ENCODE measurements at regions of chr2 and their contacts with region 1.

Region 1: DNA sequence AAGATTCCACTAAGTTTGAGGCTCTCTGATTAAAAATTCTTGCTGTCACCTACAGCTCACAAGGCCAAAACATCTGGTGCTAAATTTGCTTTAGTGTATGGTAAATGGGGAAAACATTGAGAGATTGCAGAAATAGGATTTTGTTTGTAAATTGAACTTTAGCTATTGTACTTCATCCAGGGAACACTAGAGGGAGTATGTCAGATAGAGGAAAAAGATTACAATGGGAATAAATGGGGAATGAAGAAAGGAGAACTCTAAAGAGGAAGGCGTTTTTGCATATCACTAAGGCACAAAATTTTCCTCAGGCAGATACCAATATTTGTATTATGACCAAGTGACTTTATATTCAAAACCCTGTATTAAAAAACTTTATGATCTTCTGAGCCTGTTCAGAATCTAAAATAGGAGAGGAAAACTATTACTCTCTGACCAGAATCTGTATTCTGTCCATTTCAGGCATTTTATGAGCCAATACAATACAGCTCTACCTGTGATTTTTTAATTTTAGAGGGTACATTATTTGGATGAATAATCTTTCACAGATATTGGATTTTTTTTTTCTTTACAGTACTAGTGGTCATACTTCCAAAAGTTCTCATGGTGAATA is 52.3 kb upstream of the ITGB6 start:
- DNase-seq: no peak
- ATAC-seq: peak in 4 of 8 donors; percentile 38 to 57 (median 48)
- H3K4me3 ChIP-seq: no peak overlapping the region
- H3K27ac ChIP-seq: peak overlapping the region in 9 of 10 donors; percentile 35 to 78 (median 69)
- H3K4me1 ChIP-seq: peaks cover 0 to 36% (median 11%) of the 10 kb centered on the region in 9 donors
- H3K27me3 ChIP-seq: no peaks in the 10 kb centered on the region
- CTCF ChIP-seq: peak; percentile 67 to 87 (median 79)

Region 2: DNA sequence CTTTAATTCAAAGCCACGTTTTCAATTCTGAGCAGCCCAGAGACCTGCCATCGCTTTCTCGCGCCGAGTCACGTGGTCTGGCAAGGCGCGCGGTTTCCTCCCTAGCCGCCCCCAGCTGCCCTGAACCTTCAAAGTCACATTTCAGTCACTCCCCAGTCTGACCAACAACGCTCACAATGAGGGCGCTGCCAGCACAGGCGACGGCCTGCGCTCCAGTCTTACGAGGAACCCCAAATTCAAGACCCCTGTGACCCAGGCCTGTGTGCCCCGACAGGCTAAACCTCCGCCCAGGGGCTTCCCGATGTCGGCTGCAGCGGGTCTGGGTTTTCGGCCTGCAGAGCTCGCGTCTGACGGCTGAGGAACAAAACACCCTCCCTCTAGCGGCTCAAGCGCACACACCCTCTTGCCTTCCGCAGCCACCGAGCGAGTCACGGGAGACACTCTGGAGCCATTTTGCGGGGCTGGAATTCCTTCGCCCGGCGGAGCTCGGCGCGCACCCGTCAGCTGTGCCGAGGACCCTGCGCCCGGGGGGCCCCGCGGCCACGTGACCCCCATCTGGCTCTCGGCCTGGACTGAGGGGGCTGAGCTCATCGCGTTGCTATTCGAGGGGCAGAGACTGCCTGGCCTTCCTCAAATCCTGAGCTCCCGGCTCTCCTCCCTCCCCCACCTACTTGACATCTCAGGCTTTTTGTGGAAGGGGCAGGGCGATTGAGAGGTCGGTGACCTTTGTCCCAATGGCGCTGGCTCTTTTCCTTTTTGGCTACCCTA is 17.6 kb after region 1 on chr2:
- intact Hi-C with region 1: loop called in 2 of 10 experiments (anchors 2 kb)
- DNase-seq: peak; percentile 88 to 93
- ATAC-seq: peak; percentile 88 to 94 (median 92)
- H3K4me3 ChIP-seq: peak overlapping the region; percentile 12 to 60 (median 56)
- H3K27ac ChIP-seq: peak overlapping the region; percentile 90 to 99 (median 95)
- H3K4me1 ChIP-seq: peaks cover 4 to 43% (median 33%) of the 10 kb centered on the region in 9 donors
- H3K27me3 ChIP-seq: no peaks in the 10 kb centered on the region
- CTCF ChIP-seq: peak; percentile 60 to 85 (median 69)

Region 3: DNA sequence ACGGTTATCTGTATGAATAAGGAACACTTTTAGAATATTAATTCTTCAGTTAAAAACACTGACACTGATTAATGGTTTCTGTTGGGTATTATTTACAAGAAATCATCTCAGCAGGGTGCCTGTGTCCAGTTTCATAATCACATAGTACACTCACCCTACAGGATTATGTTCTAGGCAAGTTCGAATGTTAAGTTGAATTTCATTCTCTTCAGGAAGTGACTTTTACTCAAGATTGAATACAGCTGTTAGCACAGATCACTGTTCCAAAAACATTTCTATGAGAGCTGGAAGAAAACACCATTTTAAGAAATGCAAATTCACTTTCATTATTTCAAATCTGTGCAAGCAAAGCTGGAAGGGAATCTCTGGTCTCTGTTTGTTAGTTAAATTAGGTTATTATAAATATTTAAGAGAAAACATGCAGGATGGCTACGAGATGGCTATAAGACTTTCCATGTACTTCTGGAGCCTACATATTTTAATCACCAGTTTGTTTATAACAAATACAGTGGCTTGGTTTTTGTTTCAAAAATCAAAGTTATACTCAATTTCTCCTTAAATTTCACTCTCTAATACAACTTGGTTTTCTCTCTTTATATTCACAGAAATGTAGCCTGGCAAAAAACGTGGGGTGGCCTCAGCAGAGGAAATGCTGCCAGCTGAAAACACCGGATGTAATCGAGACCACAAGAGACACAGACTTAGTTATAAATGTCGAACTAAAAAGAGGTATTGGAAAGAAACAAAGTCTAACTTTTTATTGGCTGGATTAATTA is 175.4 kb after region 1 on chr2:
- intact Hi-C with region 1: no loop called
- DNase-seq: peak in 1 of 2 donors; percentile 42
- ATAC-seq: peak in 7 of 8 donors; percentile 56 to 83 (median 70)
- H3K4me3 ChIP-seq: peak overlapping the region in 6 of 10 donors; percentile 8 to 26 (median 15)
- H3K27ac ChIP-seq: peak overlapping the region; percentile 11 to 79 (median 65)
- H3K4me1 ChIP-seq: peaks cover 6 to 79% (median 61%) of the 10 kb centered on the region in 9 donors
- H3K27me3 ChIP-seq: no peaks in the 10 kb centered on the region
- CTCF ChIP-seq: no peak

Region 4: DNA sequence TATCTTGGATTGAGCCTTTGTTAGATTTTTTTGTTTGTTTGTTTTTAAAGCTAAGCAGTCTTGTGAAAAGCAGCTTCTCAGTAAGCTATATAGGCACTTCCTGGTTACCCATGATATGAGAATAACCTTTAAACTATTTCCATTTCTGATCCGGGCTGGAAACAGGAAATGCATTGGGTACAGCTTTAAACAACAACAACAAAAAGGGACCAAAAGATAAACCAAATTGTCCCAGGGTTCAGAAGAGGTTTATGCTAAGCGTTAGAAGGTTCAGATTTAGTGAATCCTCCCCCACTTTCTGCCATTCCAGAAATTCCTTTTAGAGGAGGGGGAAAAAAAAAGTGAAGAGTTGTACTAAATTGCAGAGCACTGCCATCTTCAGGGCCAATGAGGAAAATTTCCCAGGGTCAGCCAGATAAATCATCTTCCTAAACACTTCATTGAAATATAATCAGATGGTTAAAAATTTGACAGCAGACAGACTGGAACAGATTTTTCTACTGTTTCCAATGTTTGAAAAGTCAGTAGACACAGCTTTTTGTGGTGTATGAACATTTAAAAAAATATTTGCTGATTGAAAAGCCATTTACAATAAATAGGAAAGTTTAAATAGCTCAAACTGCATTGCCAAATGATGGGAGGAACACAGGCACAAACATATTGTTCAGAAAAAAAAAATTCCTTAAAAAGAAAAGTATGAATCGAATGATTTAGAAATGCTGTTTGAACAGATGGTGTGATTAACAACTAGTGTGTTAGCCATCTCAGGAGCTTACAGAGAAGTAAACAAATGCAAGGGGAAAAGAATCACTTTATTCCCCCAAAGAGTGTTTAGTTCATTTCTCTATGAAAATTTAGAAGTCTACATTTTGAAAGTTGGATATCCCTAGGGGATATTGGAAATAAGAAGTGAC is 717.9 kb after region 1 on chr2:
- intact Hi-C with region 1: loop called in 2 of 10 experiments (anchors 5 to 10 kb)
- DNase-seq: peak in 1 of 2 donors; percentile 57
- ATAC-seq: peak; percentile 32 to 81 (median 74)
- H3K4me3 ChIP-seq: peak overlapping the region in 7 of 10 donors; percentile 9 to 40 (median 32)
- H3K27ac ChIP-seq: peak overlapping the region in 9 of 10 donors; percentile 14 to 75 (median 68)
- H3K4me1 ChIP-seq: peaks cover 0 to 24% (median 13%) of the 10 kb centered on the region in 9 donors
- H3K27me3 ChIP-seq: no peaks in the 10 kb centered on the region
- CTCF ChIP-seq: peak; percentile 49 to 86 (median 80)

Region 5: DNA sequence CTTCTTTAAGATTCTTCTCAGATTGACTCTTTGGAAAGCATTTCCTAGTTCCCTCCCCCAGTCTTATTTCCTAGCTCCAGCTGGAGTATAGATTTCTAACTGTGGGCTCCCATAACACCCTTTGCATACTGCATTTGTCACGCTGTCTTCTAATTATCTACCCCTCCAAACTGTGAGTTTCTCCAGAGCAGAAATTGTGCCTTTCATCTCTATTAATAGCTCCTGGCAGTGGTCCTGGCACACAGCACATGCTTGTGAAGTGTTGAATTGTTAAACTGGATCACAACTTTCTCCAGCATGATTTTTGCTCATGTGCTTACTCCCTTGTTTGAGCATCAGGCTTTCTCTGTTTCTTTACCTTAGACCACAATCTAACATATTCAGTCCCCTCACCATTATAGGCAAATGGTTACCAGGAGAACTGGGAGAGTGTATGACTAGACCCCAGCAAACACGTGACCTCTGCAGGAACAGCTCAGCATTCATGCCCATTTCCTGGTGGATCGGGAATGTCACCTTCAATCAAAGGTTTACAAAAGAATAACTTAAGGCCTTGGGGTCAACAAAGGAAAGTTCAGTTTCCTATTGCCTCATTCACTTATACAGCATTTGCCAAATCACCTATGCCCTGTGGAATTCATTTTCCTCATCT is 732.2 kb after region 1 on chr2:
- intact Hi-C with region 1: loop called in 2 of 10 experiments (anchors 10 kb)
- DNase-seq: peak in 1 of 2 donors; percentile 76
- ATAC-seq: peak; percentile 85 to 97 (median 91)
- H3K4me3 ChIP-seq: no peak overlapping the region
- H3K27ac ChIP-seq: peak overlapping the region in 9 of 10 donors; percentile 11 to 80 (median 59)
- H3K4me1 ChIP-seq: peaks cover 0 to 20% (median 15%) of the 10 kb centered on the region in 9 donors
- H3K27me3 ChIP-seq: no peaks in the 10 kb centered on the region
- CTCF ChIP-seq: no peak

Region 6: DNA sequence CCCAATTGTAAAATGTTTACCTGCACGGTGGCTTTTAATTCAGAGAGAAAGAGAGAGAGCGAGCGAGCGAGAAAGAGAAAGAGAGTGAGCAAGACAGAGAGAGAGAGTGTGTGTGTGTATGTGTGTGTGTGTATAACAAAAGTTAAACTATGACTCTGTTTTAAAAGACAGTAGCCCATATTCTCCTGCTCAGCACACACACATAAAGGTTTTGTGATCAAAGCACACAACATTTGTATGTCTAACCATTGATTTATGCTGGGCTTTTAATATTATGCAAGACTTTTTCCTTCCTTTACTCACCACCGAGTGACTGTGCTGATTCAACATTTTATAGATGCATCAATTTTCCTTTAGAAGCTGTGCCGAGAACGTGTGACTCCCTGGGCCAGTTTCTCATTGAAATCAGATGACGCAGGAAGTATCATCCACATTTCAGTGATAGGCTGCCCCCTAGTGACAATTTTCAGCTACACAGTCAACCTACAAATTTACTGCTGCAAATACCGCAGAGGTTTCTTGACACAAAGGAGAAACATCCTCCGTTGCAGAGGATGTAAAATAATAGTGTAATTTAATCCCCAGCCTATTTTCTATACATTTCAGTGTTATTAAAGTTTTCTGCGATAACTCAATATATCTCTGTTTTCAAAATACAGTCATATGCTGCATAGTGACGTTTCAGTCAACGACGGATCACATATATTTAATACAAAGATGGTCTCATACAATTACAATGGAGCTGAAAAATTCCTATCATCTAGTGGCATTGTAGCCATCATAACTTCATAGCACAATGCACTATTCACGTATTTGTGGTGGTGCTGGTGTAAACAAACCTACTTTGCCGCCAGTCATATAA is 742.0 kb after region 1 on chr2:
- intact Hi-C with region 1: loop called in 4 of 10 experiments (anchors 5 to 10 kb)
- DNase-seq: peak in 1 of 2 donors; percentile 83
- ATAC-seq: peak; percentile 81 to 94 (median 89)
- H3K4me3 ChIP-seq: peak overlapping the region in 3 of 10 donors; percentile 10 to 20 (median 18)
- H3K27ac ChIP-seq: peak overlapping the region in 9 of 10 donors; percentile 11 to 72 (median 41)
- H3K4me1 ChIP-seq: peaks cover 0 to 14% (median 5%) of the 10 kb centered on the region in 9 donors
- H3K27me3 ChIP-seq: no peaks in the 10 kb centered on the region
- CTCF ChIP-seq: peak; percentile 77 to 91 (median 87)